Left colon (tissue), 2 donors: ENCODE measurements at regions of chr3 and their contacts with region 1.

Region 1: DNA sequence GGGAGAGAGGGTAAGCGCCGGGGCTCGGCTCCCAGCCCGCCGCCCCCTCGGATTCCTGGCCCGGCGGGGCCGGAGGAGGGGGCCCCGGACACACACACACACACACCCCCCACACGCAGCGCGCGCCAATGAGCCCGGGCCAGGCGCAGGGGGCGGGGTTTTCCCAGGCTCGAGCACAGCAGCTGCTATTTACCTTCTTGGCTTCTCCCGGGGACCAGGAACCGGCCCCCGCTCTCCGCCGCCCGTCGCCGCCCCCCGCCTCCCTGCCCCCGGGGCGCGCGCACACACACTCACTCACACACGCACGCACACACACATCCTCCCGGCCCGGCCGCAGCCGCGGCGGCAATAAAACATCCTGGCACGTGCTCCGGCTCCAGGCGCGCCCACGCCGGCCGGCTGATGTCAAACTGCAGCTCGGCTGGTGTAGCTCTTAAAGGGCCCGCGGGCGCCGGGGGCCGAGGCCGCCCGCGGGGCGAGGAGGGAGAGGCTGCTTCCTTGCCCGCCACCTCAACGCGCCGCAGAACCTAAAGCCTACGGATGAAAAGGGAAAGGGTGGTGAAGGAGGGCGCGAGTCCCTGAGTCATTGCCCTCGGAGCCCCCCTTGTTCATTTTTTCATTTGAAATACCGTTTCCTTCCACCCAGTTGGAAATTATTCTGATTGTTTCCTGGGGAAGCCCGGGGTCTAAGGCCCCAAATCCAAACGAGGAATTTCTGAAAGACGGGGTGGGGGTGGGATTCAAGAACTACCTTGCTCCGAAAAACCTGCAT is 1.0 kb upstream of the HES1 start:
- DNase-seq: peak; percentile 94 to 95
- ATAC-seq: peak; percentile 64

Region 2: DNA sequence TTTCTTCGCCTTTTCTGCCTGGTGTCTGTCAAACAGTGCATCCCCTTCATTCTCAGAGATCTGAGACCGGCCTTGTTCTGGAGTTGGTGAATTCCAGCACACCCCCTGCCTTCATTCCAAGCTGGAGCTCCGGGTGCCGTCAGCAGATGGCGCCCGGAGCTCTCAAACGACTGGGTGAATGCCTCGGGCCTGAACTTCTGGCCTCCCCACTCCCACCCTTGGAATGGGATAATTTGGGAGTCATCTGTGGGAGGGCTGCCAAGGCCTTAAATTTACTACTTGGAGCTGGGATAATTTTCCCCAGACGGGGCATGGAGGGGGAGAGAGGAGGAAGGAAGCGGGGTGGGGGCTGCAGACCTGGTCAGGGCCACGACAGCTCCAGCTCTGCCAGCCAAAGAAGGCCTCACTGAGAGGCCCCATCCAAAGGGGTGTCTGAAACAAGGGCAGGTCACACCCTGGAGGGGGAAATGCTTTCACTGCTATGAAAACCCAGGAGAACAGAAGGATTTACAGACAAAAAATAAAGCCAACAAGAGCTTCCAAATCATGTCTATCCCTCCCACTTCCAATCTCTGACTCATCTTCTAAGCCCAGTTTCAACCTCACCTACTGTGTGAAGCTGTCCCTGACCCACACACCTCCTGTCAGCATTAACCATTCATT is 354.0 kb before region 1 on chr3:
- intact Hi-C with region 1: loop called (anchors 5 to 10 kb)
- DNase-seq: peak; percentile 66 to 75
- ATAC-seq: peak; percentile 73

Region 3: DNA sequence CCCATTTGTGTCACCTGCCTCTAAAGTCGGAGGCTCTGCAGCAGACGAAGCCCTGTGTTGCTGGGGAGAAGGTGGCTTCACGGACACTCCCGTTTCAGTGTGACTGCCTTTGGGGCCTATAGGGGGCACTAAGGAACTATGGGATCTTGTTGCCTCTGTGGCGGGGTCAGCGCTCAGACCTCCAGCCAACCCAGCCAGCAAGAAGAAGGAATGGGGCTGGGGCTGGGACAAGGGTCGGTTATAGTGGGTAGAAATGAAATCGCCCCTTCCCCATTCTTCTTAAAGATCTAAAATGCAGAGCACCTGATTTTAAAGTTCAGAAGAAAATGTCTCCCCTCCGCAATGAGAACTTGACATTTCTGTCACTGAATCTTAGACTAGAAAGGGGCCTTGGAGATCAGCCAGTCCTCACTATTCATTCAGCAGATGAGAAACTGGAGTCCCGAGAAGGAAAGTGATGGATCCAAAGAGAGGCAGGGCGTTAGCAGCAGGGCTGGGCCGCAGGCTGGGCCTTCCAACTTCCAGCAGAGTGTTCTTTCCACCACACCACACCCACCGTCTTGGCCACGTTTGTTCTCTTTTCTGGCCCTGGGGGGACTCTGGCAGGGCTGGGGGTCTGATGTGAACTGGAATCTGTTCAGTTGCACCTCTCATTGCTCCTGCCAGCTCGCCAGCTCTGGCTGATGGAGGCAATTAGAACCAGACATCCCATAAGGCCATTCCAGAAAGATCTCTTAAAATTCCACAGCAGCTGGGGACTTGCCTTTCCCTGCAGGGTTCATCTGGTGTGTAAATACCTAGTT is 346.6 kb before region 1 on chr3:
- intact Hi-C with region 1: loop called (anchors 5 to 10 kb)
- DNase-seq: peak; percentile 58 to 60
- ATAC-seq: peak; percentile 91

Region 4: GRCh38 chr3:194003125-194004057 is 131.6 kb before region 1 on chr3:
- intact Hi-C with region 1: no loop called
- DNase-seq: peak; percentile 88 to 92
- ATAC-seq: peak; percentile 84

Region 5: DNA sequence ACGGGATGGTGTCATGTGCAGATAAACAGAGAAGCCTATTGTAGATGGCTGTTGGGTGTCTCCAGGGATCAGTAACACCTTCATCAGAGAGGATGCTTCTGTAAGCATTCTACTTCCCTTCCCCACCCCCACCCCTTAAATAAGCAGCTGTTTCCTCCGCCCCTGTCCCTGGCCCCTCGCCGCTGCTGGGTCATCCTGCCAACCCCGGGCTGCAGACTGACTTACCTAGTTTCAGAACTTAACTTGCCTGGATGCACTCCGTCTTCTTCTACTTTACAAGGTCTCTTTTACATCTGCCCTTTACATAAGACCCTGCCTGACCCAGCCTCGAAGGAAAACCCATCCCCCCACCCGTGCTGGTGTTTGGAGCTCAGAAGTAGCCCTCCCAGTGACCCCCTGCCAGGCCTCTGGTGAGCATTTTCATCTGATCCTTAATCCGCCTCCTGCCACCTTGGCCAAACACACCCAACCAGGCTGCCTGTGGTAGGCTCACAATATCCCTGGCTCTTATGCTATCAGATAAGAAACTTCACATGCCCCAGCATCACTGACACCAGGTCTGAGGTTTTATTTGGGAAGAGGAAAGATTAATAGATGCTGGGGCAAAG is 102.0 kb before region 1 on chr3:
- intact Hi-C with region 1: no loop called
- DNase-seq: no peak
- ATAC-seq: no peak

Region 6: DNA sequence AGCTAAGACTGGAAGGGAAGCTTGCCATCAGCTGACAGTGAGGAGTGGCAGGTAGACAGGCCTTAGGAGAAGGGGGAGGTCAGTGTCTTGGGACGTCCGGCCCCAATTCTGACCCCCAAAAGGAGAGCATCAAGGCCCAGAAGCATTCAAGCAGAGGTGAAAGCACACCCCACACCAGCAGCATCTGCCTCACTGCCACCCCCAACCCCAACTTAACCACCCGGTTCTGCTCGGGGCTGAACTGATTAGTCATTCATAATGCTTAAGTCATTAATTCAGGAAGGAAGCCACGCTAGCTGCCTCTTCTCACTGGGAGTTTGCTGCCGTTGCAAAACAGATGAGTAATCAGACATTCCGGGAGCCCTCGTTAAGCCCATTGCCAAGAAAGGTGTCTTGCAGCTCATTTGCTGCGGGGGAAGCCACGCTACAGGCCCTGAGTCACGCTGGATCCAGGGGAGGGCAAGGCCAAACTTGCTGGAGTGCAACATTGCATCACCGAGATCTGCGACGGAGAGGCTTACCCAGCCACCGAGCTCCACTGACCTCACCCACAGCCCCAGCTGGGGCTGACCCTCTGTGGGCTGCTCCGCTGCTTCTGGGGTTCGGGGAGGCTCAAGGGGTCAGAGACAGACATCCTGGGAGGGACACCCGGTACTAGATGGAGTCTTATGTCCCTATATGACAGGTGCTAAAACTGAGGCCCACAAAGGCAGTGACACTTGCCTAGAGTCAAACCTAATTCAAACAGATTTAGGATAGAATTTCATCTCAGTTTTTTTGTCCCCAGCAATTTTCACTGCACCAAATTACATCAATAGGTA is 45.4 kb before region 1 on chr3:
- intact Hi-C with region 1: no loop called
- DNase-seq: peak; percentile 44 to 79
- ATAC-seq: peak; percentile 27

Region 7: GRCh38 chr3:194265483-194265892 is 130.5 kb after region 1 on chr3:
- intact Hi-C with region 1: loop called (anchors 5 to 10 kb)
- DNase-seq: peak; percentile 57 to 81
- ATAC-seq: peak; percentile 35

Region 8: DNA sequence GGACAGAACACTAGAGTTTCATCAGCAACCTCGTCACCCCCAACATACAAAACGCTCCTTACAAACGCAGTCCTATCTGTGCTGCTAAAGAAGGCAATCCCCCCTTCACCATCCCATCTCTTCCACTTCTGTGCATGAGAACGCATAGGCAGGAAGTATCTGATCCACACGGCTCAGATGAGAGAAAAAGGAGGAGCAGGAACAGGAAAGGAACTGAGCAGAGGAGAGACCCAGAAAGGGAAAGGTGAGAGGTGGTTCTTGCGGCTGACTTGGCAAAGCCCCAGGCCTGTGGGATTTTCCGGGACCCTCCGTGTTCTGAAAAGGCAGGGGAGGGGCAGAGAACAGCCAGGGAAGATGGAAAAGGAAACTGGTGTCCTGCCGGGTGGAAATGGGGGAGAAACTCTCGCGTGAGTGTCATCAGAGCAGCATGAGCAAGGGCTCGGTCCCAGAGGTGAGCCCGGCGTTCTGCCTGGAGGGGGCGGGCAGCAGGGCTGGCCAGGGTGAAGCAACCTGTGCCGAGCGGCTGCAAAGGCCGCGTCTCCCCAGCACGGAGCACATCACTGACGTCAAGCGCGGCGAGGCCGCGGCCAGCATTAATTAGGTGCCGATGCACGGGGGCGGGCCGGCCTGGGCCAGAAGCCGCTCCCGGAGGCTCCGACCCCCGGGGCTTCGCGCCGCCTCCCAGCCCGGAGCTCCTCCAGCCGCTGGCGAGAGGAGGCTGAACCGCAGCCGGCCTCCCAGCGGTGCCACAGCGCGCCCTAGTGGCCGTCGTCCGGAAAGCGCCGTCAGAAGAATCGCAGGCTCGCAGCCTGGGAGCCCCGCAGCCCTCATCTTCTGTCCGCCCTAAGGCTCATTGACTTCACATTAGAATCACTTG is 180.4 kb after region 1 on chr3:
- intact Hi-C with region 1: loop called in 1 of 2 experiments (anchors 10 kb)
- DNase-seq: peak; percentile 69 to 85
- ATAC-seq: peak; percentile 85